ENCODE measurements at regions of chr1 and their contacts with region 1.

Region 1: DNA sequence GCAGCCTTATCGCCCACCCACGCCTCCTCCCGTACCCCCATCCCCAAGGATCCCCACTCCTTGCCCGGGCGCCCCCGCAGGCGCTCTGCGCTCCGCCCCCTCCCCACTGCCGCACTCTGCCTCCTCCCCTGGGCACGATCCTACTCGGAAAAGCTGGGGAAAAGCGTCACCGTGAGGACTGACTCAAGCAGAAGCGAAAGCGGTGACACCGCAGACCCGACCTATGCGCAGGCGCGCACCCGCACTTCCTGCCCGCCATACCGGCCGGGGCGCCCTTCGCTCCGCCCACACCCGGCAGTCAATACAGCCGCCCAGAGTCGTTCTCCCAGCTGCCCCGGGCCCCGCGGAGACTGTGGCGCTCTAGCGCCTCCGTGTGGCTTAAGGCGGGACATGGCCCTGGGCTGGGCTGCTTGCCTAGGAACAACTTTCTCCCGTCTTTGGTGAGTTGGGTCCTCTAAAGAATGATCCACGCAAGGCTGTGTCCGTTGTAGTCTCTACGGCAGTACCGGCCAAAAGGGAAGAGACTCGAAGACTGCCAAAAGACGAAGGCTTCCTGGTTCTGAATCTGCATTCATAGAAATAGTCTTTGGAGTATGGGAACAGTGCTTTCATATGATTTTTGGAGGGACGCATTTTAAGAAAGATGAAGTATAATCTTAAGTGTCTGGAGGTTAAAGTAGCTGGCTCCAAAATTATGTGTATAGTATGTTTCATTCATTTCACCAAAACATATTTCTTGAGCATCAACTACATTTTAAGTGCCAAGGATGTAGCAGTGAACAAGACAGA is at the start of gene OMA1:
- DNase-seq: peak; percentile 97
- H3K4me3 Mint-ChIP-seq: peak within 1 kb of the TSS; percentile 89
- H3K27ac Mint-ChIP-seq: peak within 1 kb of the TSS; percentile 96
- H3K4me1 Mint-ChIP-seq: peaks cover 21% of the 10 kb centered on the region
- H3K27me3 Mint-ChIP-seq: peaks cover 17% of the 10 kb centered on the region
- total RNA-seq, gene OMA1: 10.2 and 10.3 TPM in 2 replicates

Region 2: DNA sequence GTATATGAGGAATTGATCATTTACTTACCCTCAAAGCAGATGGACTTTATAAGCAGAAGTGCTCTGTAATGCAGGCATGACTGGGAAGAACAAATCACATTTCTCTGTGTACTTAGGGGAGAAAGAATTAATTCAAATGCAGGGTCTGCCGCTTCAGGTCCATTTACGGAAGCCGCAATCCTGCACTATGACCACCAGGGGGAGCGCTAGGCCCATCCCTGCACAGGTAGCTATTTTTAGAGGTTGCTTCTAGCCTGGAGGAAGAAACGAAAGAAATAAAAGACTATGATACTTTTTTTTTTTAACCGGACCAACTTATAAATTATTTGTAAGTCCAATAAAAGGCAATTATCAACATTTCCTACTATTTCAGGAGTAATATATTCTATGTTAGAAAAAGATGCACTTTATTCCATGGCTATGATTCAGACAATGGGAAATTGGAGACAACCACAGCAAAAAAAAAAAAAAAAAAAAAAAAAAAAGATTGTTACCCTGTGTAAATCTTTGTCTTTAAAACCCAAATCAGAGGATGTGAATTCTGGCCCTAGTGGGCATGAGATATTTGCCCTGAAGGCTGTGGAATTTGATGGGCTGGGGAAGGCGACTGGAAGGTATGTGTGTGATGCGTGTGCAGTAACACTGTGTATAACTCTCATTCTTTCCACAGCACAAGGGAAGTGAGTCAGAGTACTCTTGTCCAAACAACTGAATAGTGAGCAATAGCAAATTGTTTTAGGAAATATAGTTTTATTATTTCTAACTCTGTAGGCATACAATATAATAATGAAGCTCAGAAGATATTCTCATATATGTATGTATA is 1714.6 kb before region 1 on chr1:
- intact Hi-C with region 1: loop called (anchors 2 kb)
- DNase-seq: peak; percentile 43
- H3K4me3 Mint-ChIP-seq: no peak overlapping the region
- H3K27ac Mint-ChIP-seq: no peak overlapping the region
- H3K4me1 Mint-ChIP-seq: no peaks in the 10 kb centered on the region
- H3K27me3 Mint-ChIP-seq: no peaks in the 10 kb centered on the region

Region 3: GRCh38 chr1:58515794-58516401 is 30.8 kb before region 1 on chr1:
- intact Hi-C with region 1: loop called (anchors 1 kb)
- DNase-seq: no peak
- H3K4me3 Mint-ChIP-seq: no peak overlapping the region
- H3K27ac Mint-ChIP-seq: no peak overlapping the region
- H3K4me1 Mint-ChIP-seq: peaks cover 14% of the 10 kb centered on the region
- H3K27me3 Mint-ChIP-seq: no peaks in the 10 kb centered on the region

Region 4: DNA sequence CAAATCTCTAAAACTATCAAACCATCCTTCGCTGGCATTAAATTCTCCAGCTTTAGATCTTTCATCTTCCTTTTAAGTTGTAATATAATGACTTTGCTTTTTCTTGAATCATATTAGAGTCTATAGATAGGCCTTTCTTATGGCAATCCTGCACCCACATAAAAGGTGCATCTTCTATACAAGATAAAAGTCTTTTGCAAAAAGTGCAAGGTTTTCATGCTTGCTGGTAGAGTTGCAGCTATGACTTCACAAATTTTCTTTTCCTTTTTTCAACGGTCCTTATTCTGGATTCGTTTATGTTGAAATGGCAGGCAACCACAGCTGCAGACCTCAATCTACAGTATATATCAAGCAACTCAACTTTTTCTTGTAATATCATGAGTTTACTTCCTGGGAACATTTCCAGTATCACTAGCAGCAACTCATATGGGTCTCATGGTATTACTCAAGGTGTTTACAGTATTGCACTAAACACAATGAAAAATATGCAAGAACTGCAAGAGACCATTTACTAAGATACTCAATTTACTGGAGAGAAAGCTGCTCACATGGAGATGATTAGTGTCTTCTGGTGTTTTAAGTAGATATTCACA is 22.3 kb before region 1 on chr1:
- intact Hi-C with region 1: loop called (anchors 1 kb)
- DNase-seq: no peak
- H3K4me3 Mint-ChIP-seq: no peak overlapping the region
- H3K27ac Mint-ChIP-seq: no peak overlapping the region
- H3K4me1 Mint-ChIP-seq: peaks cover 19% of the 10 kb centered on the region
- H3K27me3 Mint-ChIP-seq: no peaks in the 10 kb centered on the region

Region 5: DNA sequence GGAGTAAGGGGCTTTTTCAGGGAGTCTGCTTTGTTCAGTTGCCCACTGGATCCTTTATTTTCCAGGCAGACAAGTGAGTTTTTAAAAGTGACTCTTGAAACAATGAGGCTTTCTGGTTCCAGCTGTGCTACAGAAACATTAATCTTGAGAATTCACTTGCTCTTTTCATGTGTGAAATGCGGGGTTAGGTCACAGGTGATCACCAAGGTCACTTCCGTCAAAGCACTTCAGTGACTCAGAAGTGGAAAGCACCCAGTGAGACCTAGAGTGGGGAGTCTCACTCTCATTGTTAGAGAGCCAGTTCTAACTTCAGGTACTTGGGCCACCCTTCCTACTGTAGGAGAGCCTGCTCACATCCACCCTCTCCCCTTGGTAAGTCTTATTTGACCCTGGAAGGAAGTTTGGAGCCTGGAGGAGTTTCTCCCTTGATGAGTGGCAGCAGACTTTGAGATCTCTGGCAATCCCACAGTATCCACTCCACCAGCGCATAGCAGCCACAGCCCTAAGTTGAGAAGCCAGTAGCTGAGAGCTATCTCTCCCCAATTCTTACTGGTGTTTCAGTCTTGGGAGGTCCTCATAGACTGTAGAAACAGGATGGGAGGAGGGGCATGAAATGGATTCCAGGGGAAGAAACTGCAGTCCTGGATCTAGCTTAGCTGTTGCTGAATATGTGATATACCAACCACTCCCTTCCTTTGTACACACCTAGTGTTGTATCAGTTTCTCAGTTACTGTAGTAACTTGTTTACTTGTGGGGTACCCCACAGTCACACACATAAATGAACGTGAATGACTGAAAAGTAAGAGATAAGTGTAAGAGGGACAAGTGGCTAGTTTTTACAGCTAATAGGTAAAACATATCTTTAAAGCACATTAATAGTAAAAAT is 27.2 kb after region 1 on chr1:
- intact Hi-C with region 1: loop called (anchors 1 kb)
- DNase-seq: peak; percentile 42
- H3K4me3 Mint-ChIP-seq: no peak overlapping the region
- H3K27ac Mint-ChIP-seq: no peak overlapping the region
- H3K4me1 Mint-ChIP-seq: peaks cover 32% of the 10 kb centered on the region
- H3K27me3 Mint-ChIP-seq: peaks cover 75% of the 10 kb centered on the region

Region 6: DNA sequence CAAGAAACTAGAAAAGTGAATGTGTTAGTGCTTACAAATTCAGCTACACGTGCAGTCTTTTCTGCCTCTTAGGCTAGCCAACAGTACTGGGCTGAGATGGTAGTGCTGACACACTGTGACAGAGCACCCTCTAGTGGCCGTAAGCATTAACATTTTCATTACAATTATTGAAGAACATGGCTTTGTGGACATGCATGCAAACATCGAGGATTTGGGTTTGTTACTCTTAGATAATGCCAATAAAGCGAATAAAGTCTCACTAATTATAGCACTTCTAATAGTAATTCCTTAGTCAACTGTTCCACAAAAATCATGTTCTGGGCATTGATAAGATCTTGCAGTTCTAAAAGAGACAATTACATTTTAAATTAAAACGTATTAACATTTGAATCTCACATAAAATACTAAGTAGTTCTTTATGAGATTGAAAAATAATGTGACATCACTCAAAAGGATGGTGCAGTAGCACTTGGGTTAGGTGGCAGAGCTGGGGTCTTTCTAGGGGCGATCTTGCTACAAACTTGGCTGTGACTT is 106.0 kb after region 1 on chr1:
- intact Hi-C with region 1: loop called (anchors 1 kb)
- DNase-seq: peak; percentile 31
- H3K4me3 Mint-ChIP-seq: no peak overlapping the region
- H3K27ac Mint-ChIP-seq: no peak overlapping the region
- H3K4me1 Mint-ChIP-seq: peaks cover 19% of the 10 kb centered on the region
- H3K27me3 Mint-ChIP-seq: no peaks in the 10 kb centered on the region

Region 7: GRCh38 chr1:58664881-58665280 is 118.2 kb after region 1 on chr1:
- intact Hi-C with region 1: no loop called
- DNase-seq: no peak
- H3K4me3 Mint-ChIP-seq: no peak overlapping the region
- H3K27ac Mint-ChIP-seq: no peak overlapping the region
- H3K4me1 Mint-ChIP-seq: no peaks in the 10 kb centered on the region
- H3K27me3 Mint-ChIP-seq: no peaks in the 10 kb centered on the region

Measured in activated T-helper 2 cell treated with anti-CD3 and anti-CD28 coated beads, Interferon-gamma antibody, Interleukin-2, Interleukin-4, amounts not matched to agents 10 μg/mL and 5 μg/mL and 100 μg/mL, durations not matched to agents 14 hours and 24 hours and 36 hours (primary cell).